ENCODE measurements at regions of chr1 and their contacts with region 1.

Region 1: DNA sequence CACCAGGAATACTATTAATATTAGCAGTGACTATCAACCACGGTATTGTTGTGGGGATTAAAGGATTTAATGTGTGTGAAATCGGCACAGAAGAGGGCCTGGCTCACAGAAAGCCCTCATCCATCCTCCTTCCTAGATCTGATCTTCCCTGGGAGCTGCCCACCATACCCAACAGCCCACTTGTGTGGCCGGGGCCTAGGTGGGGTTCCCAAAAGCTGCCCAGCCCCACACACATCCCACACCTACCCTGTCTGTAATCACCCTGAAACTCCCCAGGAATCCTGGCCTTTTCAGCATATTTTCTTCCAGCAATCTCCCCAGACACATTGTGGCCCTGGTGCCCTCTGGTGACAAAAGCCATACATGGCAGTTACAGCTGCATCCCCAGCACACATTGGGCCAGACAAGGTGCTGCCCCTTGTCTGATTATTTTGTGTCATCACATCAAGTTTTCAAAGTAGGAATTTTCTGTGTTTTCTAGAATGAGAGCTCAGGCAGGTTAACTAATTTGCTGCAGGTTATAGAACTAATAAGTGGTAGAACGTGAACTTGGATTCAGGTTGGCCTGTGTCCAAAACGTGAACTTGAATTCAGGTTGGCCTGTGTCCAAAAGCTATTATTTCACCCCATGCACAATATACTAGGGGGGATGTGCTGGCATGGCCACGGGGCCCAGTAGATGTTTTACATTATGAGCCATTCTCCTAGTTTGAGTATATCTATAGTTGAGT is 5.3 kb upstream of the SLC6A9 start:
- DNase-seq: peak; percentile 55
- ATAC-seq: peak; percentile 60
- H3K4me3 ChIP-seq: no peak overlapping the region
- H3K27ac ChIP-seq: no peak overlapping the region
- H3K4me1 ChIP-seq: peaks cover 46% of the 10 kb centered on the region
- H3K27me3 ChIP-seq: peaks cover 0 to 2% of the 10 kb centered on the region in 2 experiments; a peak in 1 of 5 replicates
- CTCF ChIP-seq: peak; percentile 94
- EP300 ChIP-seq: no peak
- POLR2A ChIP-seq: no peak
- RAD21 ChIP-seq: peak; percentile 83

Region 2: DNA sequence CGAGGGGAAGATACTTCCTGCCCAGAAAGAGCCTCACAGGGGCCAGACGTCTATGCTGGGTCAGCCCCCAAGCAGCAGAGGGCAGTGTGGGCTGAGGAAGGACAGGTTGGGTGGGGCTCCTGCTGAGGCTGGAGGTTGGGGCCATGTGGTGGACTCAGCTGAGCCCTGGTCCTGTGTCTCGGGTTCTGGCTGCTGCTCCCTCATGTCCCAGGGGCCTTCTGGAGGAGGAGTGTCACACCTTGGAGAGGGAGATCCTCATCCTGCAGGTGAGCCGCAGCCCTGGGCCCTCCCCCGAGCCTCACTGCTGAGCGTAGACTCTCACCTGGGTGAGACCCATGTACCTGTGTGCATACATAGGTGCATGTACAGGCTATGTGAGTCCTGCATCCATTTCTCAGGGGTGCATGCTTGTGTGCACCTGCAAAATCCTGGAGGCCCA is 41.7 kb before region 1 on chr1:
- CTCF ChIA-PET with region 1: interaction called, 8 read pairs
- POLR2A ChIA-PET with region 1: interaction called, 4 read pairs
- in situ Hi-C with region 1: loop called (anchors 5 kb)
- intact Hi-C with region 1: loop called (anchors 2 kb)
- DNase-seq: peak; percentile 40
- ATAC-seq: peak; percentile 63
- H3K4me3 ChIP-seq: no peak overlapping the region
- H3K27ac ChIP-seq: no peak overlapping the region
- H3K4me1 ChIP-seq: peaks cover 54% of the 10 kb centered on the region
- H3K27me3 ChIP-seq: no peaks in the 10 kb centered on the region
- CTCF ChIP-seq: peak; percentile 86
- EP300 ChIP-seq: no peak
- POLR2A ChIP-seq: no peak
- RAD21 ChIP-seq: peak; percentile 57; the same call in 1 of the 2 replicates

Region 3: GRCh38 chr1:44002606-44003157 is 33.9 kb before region 1 on chr1:
- CTCF ChIA-PET with region 1: interaction called, 57 read pairs
- POLR2A ChIA-PET with region 1: interaction called, 9 read pairs
- in situ Hi-C with region 1: loop called (anchors 5 kb)
- intact Hi-C with region 1: loop called (anchors 1 kb)
- DNase-seq: no peak
- ATAC-seq: peak; percentile 13; the same call in 1 of the 3 replicates
- H3K4me3 ChIP-seq: no peak overlapping the region
- H3K27ac ChIP-seq: no peak overlapping the region
- H3K4me1 ChIP-seq: peaks cover 9% of the 10 kb centered on the region
- H3K27me3 ChIP-seq: no peaks in the 10 kb centered on the region
- CTCF ChIP-seq: no peak
- EP300 ChIP-seq: no peak
- POLR2A ChIP-seq: no peak
- RAD21 ChIP-seq: no peak

Region 4: GRCh38 chr1:44919400-44919799 is 882.8 kb after region 1 on chr1:
- CTCF ChIA-PET with region 1: no interaction called
- POLR2A ChIA-PET with region 1: no interaction called
- in situ Hi-C with region 1: no loop called
- intact Hi-C with region 1: no loop called
- DNase-seq: no peak
- ATAC-seq: no peak
- H3K4me3 ChIP-seq: no peak overlapping the region
- H3K27ac ChIP-seq: no peak overlapping the region
- H3K4me1 ChIP-seq: no peaks in the 10 kb centered on the region
- H3K27me3 ChIP-seq: no peaks in the 10 kb centered on the region
- CTCF ChIP-seq: no peak
- EP300 ChIP-seq: no peak
- POLR2A ChIP-seq: no peak
- RAD21 ChIP-seq: no peak